ENCODE measurements at regions of chr21 and their contacts with region 1.

Region 1: GRCh38 chr21:42862774-42863503 is 16.4 kb downstream of the WDR4 start:
- DNase-seq: no peak
- CTCF ChIP-seq: no peak

Region 2: GRCh38 chr21:42574234-42575027 is 288.5 kb before region 1 on chr21:
- in situ Hi-C with region 1: no loop called
- DNase-seq: no peak
- CTCF ChIP-seq: no peak

Region 3: DNA sequence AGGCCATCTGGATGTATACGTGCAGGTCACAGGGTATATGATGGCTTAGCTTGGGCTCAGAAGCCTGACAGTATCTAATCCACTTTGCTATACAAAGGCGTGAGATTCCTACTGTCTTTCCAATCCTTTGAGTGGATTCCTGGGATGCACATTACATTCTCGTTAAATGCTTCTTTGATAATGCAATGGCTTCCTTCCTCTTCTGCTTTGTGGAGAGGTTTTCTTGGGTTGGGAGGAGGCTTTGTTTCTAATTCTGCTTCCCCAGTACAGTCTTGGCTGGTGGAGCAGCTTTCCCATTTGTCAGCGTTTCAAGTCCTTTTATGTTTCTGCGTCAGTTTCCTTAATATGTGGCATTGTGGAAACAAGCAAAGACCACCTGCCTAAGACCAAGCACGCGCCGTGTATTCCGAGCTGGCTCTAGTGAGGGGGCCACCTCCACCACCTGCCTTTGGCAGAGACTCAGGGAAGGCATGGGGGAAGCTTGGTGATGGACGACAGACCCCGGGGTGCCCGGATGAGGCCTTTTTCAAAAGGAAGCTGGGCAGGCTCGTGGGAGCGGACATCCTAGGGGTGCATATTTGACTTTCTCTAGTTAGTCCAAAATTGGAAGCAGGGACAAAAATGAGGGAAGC is 56.3 kb before region 1 on chr21:
- in situ Hi-C with region 1: loop called (anchors 10 kb)
- DNase-seq: no peak
- CTCF ChIP-seq: no peak

Region 4: DNA sequence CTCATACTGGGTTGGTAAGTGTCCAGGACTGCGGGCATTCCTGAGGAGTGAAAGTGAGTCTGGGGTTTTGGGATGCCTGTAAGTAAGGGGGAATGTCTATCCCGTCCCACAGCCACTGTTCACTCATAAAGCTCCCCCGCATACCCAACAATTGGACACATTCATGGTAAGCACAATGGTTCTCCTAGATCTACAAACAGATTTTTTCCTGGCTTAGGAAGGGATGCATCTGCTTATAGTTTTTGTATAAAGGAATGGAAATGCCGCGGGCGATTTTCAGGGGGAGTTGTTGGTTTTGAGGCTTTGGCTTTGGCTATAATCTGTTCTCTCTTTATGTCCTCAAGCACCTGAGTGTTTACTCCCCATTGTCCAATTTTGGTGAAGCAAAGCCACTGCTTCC is 55.4 kb after region 1 on chr21:
- in situ Hi-C with region 1: loop called (anchors 5 kb)
- DNase-seq: no peak
- CTCF ChIP-seq: no peak

Region 5: GRCh38 chr21:43025636-43026307 is 162.8 kb after region 1 on chr21:
- in situ Hi-C with region 1: no loop called
- DNase-seq: no peak
- CTCF ChIP-seq: no peak